ENCODE measurements at regions of chr5 and their contacts with region 1.

Region 1: GRCh38 chr5:180784497-180785097 is 18.0 kb downstream of the MGAT1 start:
- DNase-seq: peak; percentile 87 to 92
- H3K4me3 ChIP-seq: no peak overlapping the region
- H3K27ac ChIP-seq: peak overlapping the region; percentile 75 to 83 (median 79)
- H3K4me1 ChIP-seq: peaks cover 17 to 33% of the 10 kb centered on the region in 2 donors
- H3K27me3 ChIP-seq: no peaks in the 10 kb centered on the region
- CTCF ChIP-seq: peak; percentile 32 to 84 (median 80)
- POLR2A ChIP-seq: no peak

Region 2: GRCh38 chr5:180670586-180671359 is 113.8 kb before region 1 on chr5:
- intact Hi-C with region 1: no loop called
- DNase-seq: peak; percentile 69 to 70
- H3K4me3 ChIP-seq: no peak overlapping the region
- H3K27ac ChIP-seq: no peak overlapping the region
- H3K4me1 ChIP-seq: peaks cover 14 to 17% of the 10 kb centered on the region in 2 donors
- H3K27me3 ChIP-seq: peaks cover 10% of the 10 kb centered on the region
- CTCF ChIP-seq: peak in 5 of 6 experiments; percentile 17 to 66 (median 61)
- POLR2A ChIP-seq: no peak

Region 3: DNA sequence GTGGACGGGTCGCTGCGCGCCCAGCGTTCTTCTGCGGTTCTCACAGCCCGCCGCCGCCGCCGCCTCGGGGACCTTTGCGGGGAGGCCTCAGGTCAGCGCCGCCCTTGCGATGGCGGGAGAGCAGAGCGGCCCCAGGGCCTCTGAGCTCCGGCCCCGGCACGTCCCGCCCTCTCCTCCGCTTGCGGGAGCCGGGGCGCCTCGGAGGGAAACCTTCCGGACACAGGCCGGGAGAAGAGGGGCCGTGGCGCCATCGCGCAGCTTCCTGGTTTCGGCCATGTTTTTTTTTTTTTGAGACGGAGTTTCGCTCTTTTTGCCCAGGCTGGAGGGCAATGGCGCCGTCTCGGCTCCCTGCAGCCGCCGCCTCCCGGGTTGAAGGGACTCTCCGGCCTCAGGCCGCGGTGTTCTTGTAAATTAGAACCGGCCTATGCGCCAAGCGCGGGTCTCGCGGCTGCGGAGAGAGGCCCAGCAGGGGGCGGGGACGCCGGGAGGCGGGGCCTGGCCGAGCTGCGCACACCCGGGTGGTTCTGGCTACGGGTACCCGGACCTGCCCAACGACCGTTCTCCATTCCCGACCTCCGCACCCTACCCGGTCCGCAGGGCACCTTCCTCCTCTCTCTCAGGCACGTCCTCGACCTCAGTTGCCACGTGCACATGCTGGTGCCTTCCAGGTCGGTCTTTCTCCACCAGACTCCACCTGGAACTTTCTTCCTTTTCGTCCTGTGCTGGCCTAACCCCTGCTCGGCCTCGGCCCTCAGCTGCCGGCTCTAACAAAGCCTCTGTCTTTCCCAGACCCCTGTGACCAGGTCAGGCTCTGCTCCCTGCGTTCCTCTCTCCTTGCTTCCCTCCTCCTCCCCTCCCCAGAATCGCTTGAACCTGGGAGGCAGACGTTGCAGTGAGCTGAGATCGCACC is 46.8 kb after region 1 on chr5:
- intact Hi-C with region 1: loop called (anchors 10 kb)
- DNase-seq: peak; percentile 86 to 87
- H3K4me3 ChIP-seq: peak overlapping the region; percentile 30 to 79 (median 49)
- H3K27ac ChIP-seq: peak overlapping the region; percentile 98 to 100 (median 98)
- H3K4me1 ChIP-seq: peaks cover 36 to 39% of the 10 kb centered on the region in 2 donors
- H3K27me3 ChIP-seq: no peaks in the 10 kb centered on the region
- CTCF ChIP-seq: peak in 3 of 6 experiments; percentile 9 to 31 (median 10)
- POLR2A ChIP-seq: peak; percentile 78 to 93